AG04450 (cell line): ENCODE measurements at regions of chr1 and their contacts with region 1.

Region 1: GRCh38 chr1:47192458-47193384 is 2.9 kb upstream of the PDZK1IP1 start:
- DNase-seq: peak; percentile 32
- H3K4me3 ChIP-seq: no peak overlapping the region
- H3K27ac ChIP-seq: no peak overlapping the region
- H3K27me3 ChIP-seq: peaks cover 7% of the 10 kb centered on the region
- CTCF ChIP-seq: peak; percentile 96

Region 2: GRCh38 chr1:47226121-47226838 is 33.6 kb after region 1 on chr1:
- CTCF ChIA-PET with region 1: interaction called, 13 read pairs
- POLR2A ChIA-PET with region 1: no interaction called
- DNase-seq: no peak
- H3K4me3 ChIP-seq: no peak overlapping the region
- H3K27ac ChIP-seq: no peak overlapping the region
- H3K27me3 ChIP-seq: peaks cover 96% of the 10 kb centered on the region
- CTCF ChIP-seq: no peak

Region 3: GRCh38 chr1:47409311-47410070 is 216.8 kb after region 1 on chr1:
- CTCF ChIA-PET with region 1: no interaction called
- POLR2A ChIA-PET with region 1: no interaction called
- DNase-seq: peak; percentile 51
- H3K4me3 ChIP-seq: no peak overlapping the region
- H3K27ac ChIP-seq: peak overlapping the region; percentile 47
- H3K27me3 ChIP-seq: peaks cover 4% of the 10 kb centered on the region
- CTCF ChIP-seq: no peak

Region 4: GRCh38 chr1:47478090-47478489 is 285.4 kb after region 1 on chr1:
- CTCF ChIA-PET with region 1: no interaction called
- POLR2A ChIA-PET with region 1: no interaction called
- DNase-seq: no peak
- H3K4me3 ChIP-seq: no peak overlapping the region
- H3K27ac ChIP-seq: no peak overlapping the region
- H3K27me3 ChIP-seq: peaks cover 6% of the 10 kb centered on the region
- CTCF ChIP-seq: no peak